Activated CD4-positive, alpha-beta T cell treated with anti-CD3 and anti-CD28 coated beads, Interleukin-2, amount 10 ng/mL, durations not matched to agents 24 days and 14 days (primary cell): ENCODE measurements at regions of chr14 and their contacts with region 1.

Region 1: DNA sequence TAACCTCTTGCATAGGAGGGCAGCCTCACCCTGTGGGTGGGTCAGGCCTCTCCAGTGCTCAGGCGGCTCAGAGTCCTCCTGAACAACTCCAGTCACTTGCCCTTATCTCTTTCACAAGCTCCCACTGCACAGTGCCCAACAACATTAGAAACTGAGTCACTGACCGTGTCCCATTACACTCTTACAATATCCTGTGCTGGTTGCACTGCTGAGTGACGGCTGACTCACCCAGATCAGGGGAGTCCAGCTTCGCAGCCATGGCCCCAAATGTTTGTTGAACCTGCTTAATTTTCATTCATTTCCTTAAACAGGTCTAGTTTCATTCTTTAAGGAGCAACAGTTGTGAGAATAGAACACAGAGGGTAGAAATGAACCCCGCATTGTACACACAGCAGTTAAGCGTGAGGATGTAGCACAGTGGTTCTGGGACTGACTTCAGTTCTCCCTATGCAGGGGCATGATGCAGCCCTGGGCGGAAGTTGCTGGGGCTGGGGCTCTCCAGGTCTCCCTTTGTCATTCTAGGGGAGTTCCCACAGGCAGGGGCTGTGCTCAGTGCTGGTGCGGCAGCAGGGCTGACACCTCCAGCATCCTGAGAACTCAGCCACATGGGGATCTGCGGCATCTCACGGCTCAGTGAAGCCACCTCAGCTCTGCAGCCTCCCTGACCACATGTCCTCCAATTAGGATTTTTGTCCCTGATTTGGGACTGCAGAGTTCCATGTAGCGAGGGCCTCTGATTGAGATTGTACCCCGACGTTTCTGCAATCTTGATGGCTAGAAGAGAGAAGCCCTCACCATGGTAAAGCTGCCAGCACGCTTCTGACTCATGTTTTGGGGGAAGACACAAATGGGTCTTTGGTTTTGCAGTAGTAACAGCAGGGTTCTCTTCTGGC is 16.1 kb downstream of the GPR68 start:
- DNase-seq: peak; percentile 95
- H3K4me3 Mint-ChIP-seq: peak overlapping the region; percentile 78
- H3K27ac Mint-ChIP-seq: peak overlapping the region; percentile 99
- H3K4me1 Mint-ChIP-seq: peaks cover 83% of the 10 kb centered on the region
- H3K27me3 Mint-ChIP-seq: no peaks in the 10 kb centered on the region

Region 2: DNA sequence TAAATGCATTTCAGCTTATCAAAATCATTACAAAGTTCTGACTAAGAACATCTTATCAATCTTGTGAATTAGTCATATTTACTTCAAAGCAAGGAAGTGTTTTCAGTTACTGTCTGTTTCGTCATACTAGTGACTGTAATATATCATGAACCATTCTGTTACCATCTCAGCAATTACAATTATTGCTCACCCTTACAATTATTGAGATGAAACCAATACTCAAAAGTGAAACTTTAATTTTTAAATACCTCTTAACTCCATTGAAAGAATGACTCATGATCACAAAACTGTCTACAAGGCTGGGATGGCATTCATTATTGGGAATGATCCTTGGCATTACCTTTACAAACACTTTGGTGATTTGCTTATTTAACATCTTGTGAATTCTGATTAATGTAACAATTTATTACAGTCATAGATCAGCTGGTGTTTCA is 258.2 kb before region 1 on chr14:
- intact Hi-C with region 1: loop called (anchors 2 kb)
- DNase-seq: no peak
- H3K4me3 Mint-ChIP-seq: peak overlapping the region; percentile 74
- H3K27ac Mint-ChIP-seq: peak overlapping the region; percentile 90
- H3K4me1 Mint-ChIP-seq: peaks cover 38% of the 10 kb centered on the region
- H3K27me3 Mint-ChIP-seq: no peaks in the 10 kb centered on the region

Region 3: GRCh38 chr14:91177073-91178034 is 51.0 kb before region 1 on chr14:
- intact Hi-C with region 1: loop called (anchors 2 kb)
- DNase-seq: peak; percentile 91
- H3K4me3 Mint-ChIP-seq: no peak overlapping the region
- H3K27ac Mint-ChIP-seq: peak overlapping the region; percentile 93
- H3K4me1 Mint-ChIP-seq: peaks cover 17% of the 10 kb centered on the region
- H3K27me3 Mint-ChIP-seq: no peaks in the 10 kb centered on the region

Region 4: DNA sequence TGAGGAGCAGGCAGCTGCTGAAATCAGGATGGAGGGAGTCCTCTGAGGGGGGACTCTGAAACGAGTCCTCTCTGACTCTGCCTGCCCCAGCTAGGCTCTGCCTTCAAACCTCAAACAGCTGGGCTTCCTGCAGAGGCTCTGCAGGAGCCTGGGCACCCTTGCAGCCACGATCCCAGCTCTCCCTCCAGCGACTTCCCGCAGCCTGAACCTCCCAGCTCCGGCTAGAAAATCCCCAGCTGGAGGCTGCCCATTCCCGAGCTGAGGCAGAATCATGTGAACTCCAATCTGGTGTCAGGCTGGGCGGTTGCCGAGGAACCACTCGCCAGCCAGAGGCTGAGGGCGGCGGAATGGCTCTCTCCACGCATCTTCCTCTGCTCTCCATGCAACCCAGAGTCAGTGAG is 16.1 kb after region 1 on chr14 and contains the start of gene GPR68:
- intact Hi-C with region 1: loop called (anchors 1 kb)
- DNase-seq: peak; percentile 84
- H3K4me3 Mint-ChIP-seq: peak within 1 kb of the TSS; percentile 84
- H3K27ac Mint-ChIP-seq: peak within 1 kb of the TSS; percentile 91
- H3K4me1 Mint-ChIP-seq: peaks cover 82% of the 10 kb centered on the region
- H3K27me3 Mint-ChIP-seq: no peaks in the 10 kb centered on the region
- total RNA-seq, gene GPR68: 4.6 and 4.9 TPM in 2 replicates

Region 5: DNA sequence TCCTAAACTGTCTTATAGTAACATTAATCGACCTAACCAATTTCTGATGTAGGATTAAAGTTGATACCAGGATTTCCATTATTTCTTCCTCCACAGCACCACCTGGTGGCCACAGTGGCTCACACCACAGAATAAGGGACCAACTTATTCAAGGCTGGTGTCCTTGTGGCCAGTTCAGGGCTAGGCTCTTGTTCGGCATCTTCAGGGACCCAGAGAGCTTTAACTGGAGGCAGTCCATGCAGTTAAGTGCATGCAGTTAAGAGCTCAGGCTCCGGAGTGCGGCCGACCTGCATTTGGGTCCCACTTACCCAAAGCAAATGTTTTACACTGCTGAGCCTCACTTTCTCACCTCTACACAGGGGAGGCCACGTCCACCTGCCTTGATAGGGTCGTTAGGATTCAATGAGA is 58.2 kb after region 1 on chr14:
- intact Hi-C with region 1: loop called (anchors 2 kb)
- DNase-seq: peak; percentile 94
- H3K4me3 Mint-ChIP-seq: no peak overlapping the region
- H3K27ac Mint-ChIP-seq: peak overlapping the region; percentile 77
- H3K4me1 Mint-ChIP-seq: peaks cover 14% of the 10 kb centered on the region
- H3K27me3 Mint-ChIP-seq: no peaks in the 10 kb centered on the region

Region 6: GRCh38 chr14:91418387-91419043 is 190.2 kb after region 1 on chr14:
- intact Hi-C with region 1: loop called (anchors 2 kb)
- DNase-seq: peak; percentile 95
- H3K4me3 Mint-ChIP-seq: peak overlapping the region; percentile 76
- H3K27ac Mint-ChIP-seq: peak overlapping the region; percentile 88
- H3K4me1 Mint-ChIP-seq: peaks cover 36% of the 10 kb centered on the region
- H3K27me3 Mint-ChIP-seq: peaks cover 2% of the 10 kb centered on the region